ENCODE measurements at regions of chr15 and their contacts with region 1.

Region 1: GRCh38 chr15:45587095-45587860 is at the start of gene BLOC1S6:
- DNase-seq: peak; percentile 93 to 95
- ATAC-seq: peak; percentile 87 to 95 (median 93)
- H3K4me3 ChIP-seq: peak within 1 kb of the TSS; percentile 95
- H3K27ac ChIP-seq: peak within 1 kb of the TSS; percentile 97
- H3K4me1 ChIP-seq: peaks cover 37% of the 10 kb centered on the region
- H3K27me3 ChIP-seq: no peaks in the 10 kb centered on the region
- CTCF ChIP-seq: no peak
- total RNA-seq, gene BLOC1S6: 23.7 to 55.2 (median 30.3) TPM

Region 2: DNA sequence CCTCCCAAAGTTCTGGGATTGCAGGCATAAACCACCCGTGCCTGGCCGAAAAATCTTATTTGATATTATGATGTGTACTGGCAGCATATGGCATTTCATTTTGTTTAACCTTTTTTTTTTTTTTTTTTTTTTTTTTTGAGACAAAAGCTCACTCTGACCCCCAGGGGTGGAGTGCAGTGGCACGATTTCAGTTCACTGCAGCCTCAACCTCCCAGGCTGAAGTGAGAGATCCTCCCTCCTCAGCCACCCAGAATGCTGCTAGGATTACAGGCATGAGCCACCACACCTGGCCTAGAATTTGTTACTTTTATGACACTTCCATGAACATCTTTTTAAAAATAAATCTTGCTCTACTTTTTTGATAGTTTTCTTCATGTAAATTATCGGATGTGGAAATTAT is 618.8 kb before region 1 on chr15:
- intact Hi-C with region 1: loop called in 1 of 2 experiments (anchors 5 kb)
- DNase-seq: no peak
- ATAC-seq: no peak
- H3K4me3 ChIP-seq: no peak overlapping the region
- H3K27ac ChIP-seq: no peak overlapping the region
- H3K4me1 ChIP-seq: no peaks in the 10 kb centered on the region
- H3K27me3 ChIP-seq: no peaks in the 10 kb centered on the region
- CTCF ChIP-seq: no peak

Region 3: GRCh38 chr15:45522328-45523160 is 64.7 kb before region 1 on chr15 and contains the start of gene SLC30A4:
- intact Hi-C with region 1: loop called (anchors 1 to 5 kb)
- DNase-seq: peak; percentile 78 to 82
- ATAC-seq: peak; percentile 91 to 96 (median 92)
- H3K4me3 ChIP-seq: peak within 1 kb of the TSS; percentile 94
- H3K27ac ChIP-seq: peak within 1 kb of the TSS; percentile 80
- H3K4me1 ChIP-seq: peaks cover 14% of the 10 kb centered on the region
- H3K27me3 ChIP-seq: no peaks in the 10 kb centered on the region
- CTCF ChIP-seq: peak; percentile 52
- total RNA-seq, gene SLC30A4: 1.9 to 2.2 (median 2.1) TPM

Region 4: DNA sequence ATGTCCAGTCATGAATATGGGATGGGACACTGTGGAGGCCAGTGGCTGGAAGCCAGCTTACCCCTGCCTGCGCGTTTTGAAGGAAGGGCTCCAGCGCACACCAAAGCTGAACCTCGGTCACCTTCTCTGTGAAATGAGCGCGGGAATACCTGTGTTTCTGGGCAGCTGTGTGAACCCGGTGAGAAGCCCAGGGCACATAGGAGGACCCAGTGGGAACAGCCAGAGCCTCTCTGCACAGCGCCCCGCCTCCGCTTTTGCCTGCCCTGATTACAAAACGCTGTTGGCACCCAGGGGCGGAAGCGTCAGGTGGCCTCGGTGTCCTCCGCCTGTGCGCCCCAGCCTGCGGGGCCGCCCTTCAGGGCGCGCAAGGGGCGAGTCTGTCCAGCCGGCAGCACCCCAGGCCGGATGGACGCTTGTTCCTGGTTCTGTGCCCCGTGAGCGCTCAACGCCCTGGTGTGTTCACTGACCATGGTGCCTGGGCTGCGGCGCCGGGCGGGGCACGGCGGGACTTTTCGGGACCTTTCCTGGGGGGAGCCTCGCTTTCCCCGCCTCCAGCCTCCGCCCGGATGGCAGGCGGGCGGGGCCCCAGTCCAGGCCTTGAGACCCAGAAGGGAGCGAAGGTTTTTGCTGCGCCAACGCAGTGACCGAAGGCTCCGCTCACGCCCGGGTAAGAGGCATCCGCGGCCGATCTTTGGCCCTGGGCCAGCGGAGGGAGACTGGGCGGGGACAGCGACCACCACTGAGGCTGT is 47.3 kb after region 1 on chr15 and contains the start of gene SQOR:
- intact Hi-C with region 1: loop called in 1 of 2 experiments (anchors 1 kb)
- DNase-seq: peak; percentile 93 to 96
- ATAC-seq: peak; percentile 83 to 85 (median 84)
- H3K4me3 ChIP-seq: peak within 1 kb of the TSS; percentile 75
- H3K27ac ChIP-seq: peak within 1 kb of the TSS; percentile 97
- H3K4me1 ChIP-seq: peaks cover 32% of the 10 kb centered on the region
- H3K27me3 ChIP-seq: no peaks in the 10 kb centered on the region
- CTCF ChIP-seq: no peak
- total RNA-seq, gene SQOR: 46.5 to 174 (median 152) TPM

Region 5: DNA sequence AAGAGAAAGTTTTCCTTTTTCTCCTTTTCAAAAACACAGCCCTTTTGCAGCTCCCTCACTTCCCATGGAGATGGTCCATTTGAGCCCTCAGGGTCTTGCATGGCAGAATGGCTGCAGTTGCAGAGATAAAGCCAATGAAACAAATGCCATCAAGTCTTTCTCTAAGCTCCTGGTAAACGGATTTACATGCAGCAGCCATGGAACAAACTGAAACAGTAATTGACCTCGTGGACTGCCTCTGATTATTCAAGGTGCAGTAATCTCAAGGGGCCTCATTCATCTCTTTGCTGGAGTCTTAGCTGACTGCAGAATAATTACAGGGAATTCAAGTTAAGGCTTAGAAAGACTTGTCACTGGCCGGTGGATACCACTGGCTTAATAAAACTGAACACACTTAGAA is 172.7 kb after region 1 on chr15:
- intact Hi-C with region 1: no loop called
- DNase-seq: no peak
- ATAC-seq: no peak
- H3K4me3 ChIP-seq: no peak overlapping the region
- H3K27ac ChIP-seq: no peak overlapping the region
- H3K4me1 ChIP-seq: no peaks in the 10 kb centered on the region
- H3K27me3 ChIP-seq: peaks cover 0 to 1% (median 0%) of the 10 kb centered on the region in 3 donors
- CTCF ChIP-seq: no peak

Measured in psoas muscle (tissue), 8 donors.